SK-N-SH (cell line): ENCODE measurements at regions of chr14 and their contacts with region 1.

Region 1: GRCh38 chr14:105045710-105046326 is 19.4 kb downstream of the GPR132 start:
- DNase-seq: peak; percentile 97
- H3K4me3 ChIP-seq: peak overlapping the region in 1 of 2 experiments; percentile 50; a peak in 1 of 4 replicates
- H3K27ac ChIP-seq: no peak overlapping the region
- H3K4me1 ChIP-seq: peaks cover 0 to 5% of the 10 kb centered on the region in 2 experiments; a peak in 1 of 4 replicates
- H3K27me3 ChIP-seq: no peaks in the 10 kb centered on the region
- CTCF ChIP-seq: peak; percentile 99
- EP300 ChIP-seq: no peak
- RAD21 ChIP-seq: peak; percentile 98

Region 2: GRCh38 chr14:104895786-104896661 is 149.8 kb before region 1 on chr14:
- CTCF ChIA-PET with region 1: interaction called, 51 read pairs
- POLR2A ChIA-PET with region 1: no interaction called
- DNase-seq: peak; percentile 61
- H3K4me3 ChIP-seq: no peak overlapping the region
- H3K27ac ChIP-seq: no peak overlapping the region
- H3K4me1 ChIP-seq: peaks cover 0 to 6% of the 10 kb centered on the region in 2 experiments; a peak in 1 of 4 replicates
- H3K27me3 ChIP-seq: no peaks in the 10 kb centered on the region
- CTCF ChIP-seq: no peak
- EP300 ChIP-seq: no peak
- RAD21 ChIP-seq: no peak

Region 3: GRCh38 chr14:104957146-104958113 is 88.4 kb before region 1 on chr14:
- CTCF ChIA-PET with region 1: interaction called, 26 read pairs
- POLR2A ChIA-PET with region 1: no interaction called
- DNase-seq: no peak
- H3K4me3 ChIP-seq: no peak overlapping the region
- H3K27ac ChIP-seq: no peak overlapping the region
- H3K4me1 ChIP-seq: no peaks in the 10 kb centered on the region
- H3K27me3 ChIP-seq: no peaks in the 10 kb centered on the region
- CTCF ChIP-seq: no peak
- EP300 ChIP-seq: no peak
- RAD21 ChIP-seq: no peak

Region 4: GRCh38 chr14:104985675-104986525 is 59.9 kb before region 1 on chr14 and contains the start of gene CLBA1:
- CTCF ChIA-PET with region 1: interaction called, 37 read pairs
- POLR2A ChIA-PET with region 1: no interaction called
- DNase-seq: peak; percentile 99
- H3K4me3 ChIP-seq: peak within 1 kb of the TSS; percentile 66 to 87
- H3K27ac ChIP-seq: peak within 1 kb of the TSS; percentile 51 to 62; a peak in 3 of 4 replicates
- H3K4me1 ChIP-seq: peaks cover 0 to 49% of the 10 kb centered on the region in 2 experiments; a peak in 1 of 4 replicates
- H3K27me3 ChIP-seq: no peaks in the 10 kb centered on the region
- CTCF ChIP-seq: no peak
- EP300 ChIP-seq: no peak
- RAD21 ChIP-seq: no peak
- polyA plus RNA-seq, gene CLBA1: 18.5 and 21.4 TPM in 2 replicates

Region 5: GRCh38 chr14:105026803-105027563 is 18.8 kb before region 1 on chr14:
- CTCF ChIA-PET with region 1: interaction called, 63 read pairs
- POLR2A ChIA-PET with region 1: no interaction called
- DNase-seq: no peak
- H3K4me3 ChIP-seq: no peak overlapping the region
- H3K27ac ChIP-seq: peak overlapping the region; percentile 13 to 99; a peak in 3 of 4 replicates
- H3K4me1 ChIP-seq: peaks cover 15 to 30% of the 10 kb centered on the region in 2 experiments; a peak in 2 of 4 replicates
- H3K27me3 ChIP-seq: no peaks in the 10 kb centered on the region
- CTCF ChIP-seq: no peak
- EP300 ChIP-seq: no peak
- RAD21 ChIP-seq: no peak

Region 6: DNA sequence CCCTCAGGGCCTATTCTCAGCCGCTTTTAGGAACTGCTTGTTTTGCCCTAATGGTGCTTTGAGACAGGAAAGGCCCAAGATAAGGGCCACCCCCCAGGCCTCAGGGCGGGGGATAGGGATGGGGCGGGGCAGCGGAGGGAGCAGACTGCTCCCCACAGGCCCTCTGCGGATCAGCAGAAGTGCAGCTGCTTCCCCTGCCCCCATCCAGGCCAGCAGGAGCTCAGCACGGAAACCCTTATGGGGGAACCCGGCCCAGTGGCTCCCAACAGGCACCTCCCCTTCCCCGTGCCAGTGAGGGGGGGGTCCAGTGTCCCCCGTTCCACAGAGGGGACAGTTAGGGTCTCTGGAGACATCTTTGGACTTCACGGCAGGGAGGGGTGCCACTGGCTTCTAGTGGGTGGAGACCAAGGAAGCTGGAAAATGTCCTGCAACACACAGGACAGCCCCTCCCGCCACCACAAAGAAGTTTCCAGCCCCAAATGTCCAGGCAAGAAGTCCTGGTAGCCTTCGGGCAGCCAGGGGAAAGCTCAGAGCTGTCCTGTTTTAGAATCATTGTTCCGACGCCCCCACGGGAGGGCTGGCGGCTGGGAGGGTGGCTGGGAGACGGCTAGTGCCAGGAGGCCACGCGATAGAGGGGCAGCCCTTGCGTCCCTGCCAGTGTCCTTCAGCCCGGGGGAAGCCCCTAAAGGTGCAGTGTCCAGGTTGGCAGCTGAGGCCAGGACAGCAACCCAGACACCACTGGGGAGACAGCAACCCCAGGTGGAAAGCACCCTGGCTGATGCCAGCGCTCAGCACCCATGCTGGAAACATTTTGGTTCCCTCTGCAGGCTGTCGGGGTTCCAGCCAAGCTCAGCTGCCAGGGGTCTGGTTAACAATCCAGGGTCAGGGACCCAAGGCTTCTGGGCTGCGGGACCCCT is 29.8 kb after region 1 on chr14:
- CTCF ChIA-PET with region 1: interaction called, 42 read pairs
- POLR2A ChIA-PET with region 1: no interaction called
- DNase-seq: peak; percentile 73
- H3K4me3 ChIP-seq: no peak overlapping the region
- H3K27ac ChIP-seq: no peak overlapping the region
- H3K4me1 ChIP-seq: peaks cover 0 to 8% of the 10 kb centered on the region in 2 experiments; a peak in 1 of 4 replicates
- H3K27me3 ChIP-seq: no peaks in the 10 kb centered on the region
- CTCF ChIP-seq: no peak
- EP300 ChIP-seq: no peak
- RAD21 ChIP-seq: no peak